Endothelial cell of umbilical vein (primary cell): ENCODE measurements at regions of chr6 and their contacts with region 1.

Region 1: DNA sequence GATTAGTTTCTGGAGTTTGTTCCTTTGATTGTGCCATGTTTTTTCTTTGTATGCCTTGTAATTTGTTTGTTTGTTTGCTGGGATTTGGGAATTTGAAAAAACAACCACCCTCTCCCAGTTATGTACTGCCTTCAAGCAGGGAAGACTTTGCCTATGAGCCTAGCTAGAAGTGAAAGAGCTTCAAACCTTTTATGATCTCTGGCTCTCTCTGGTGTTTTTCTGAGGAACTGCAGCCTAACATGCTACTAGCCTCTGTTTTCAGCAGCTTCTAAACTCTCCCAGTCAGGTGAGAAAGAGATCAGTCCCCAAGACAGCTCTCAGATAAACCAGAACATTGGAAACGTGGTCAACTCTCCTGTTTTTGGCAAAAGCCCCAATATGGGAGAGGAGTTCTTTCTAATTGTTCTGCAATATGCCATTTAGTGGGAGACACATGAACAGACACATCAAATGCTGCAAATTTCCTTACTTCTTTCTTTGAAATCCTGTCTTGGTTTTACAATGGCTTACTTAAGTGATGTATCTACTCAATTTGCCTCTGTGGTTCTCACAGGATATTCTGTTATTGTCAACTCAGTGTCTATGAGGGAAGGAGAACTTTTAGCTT is 58.9 kb upstream of the SERINC1 start:
- DNase-seq: peak; percentile 76
- H3K4me3 ChIP-seq: no peak overlapping the region
- H3K27ac ChIP-seq: no peak overlapping the region
- H3K4me1 ChIP-seq: no peaks in the 10 kb centered on the region
- H3K27me3 ChIP-seq: peaks cover 1 to 3% of the 10 kb centered on the region in 2 experiments
- CTCF ChIP-seq: peak; percentile 67 to 82
- POLR2A ChIP-seq: no peak

Region 2: GRCh38 chr6:122381497-122382265 is 148.9 kb before region 1 on chr6:
- CTCF ChIA-PET with region 1: interaction called, 78 read pairs
- POLR2A ChIA-PET with region 1: no interaction called
- dilution Hi-C with region 1: no loop called
- intact Hi-C with region 1: loop called (anchors 1 kb)
- DNase-seq: peak; percentile 69
- H3K4me3 ChIP-seq: no peak overlapping the region
- H3K27ac ChIP-seq: no peak overlapping the region
- H3K4me1 ChIP-seq: no peaks in the 10 kb centered on the region
- H3K27me3 ChIP-seq: no peaks in the 10 kb centered on the region
- CTCF ChIP-seq: peak; percentile 56 to 75
- POLR2A ChIP-seq: no peak

Region 3: DNA sequence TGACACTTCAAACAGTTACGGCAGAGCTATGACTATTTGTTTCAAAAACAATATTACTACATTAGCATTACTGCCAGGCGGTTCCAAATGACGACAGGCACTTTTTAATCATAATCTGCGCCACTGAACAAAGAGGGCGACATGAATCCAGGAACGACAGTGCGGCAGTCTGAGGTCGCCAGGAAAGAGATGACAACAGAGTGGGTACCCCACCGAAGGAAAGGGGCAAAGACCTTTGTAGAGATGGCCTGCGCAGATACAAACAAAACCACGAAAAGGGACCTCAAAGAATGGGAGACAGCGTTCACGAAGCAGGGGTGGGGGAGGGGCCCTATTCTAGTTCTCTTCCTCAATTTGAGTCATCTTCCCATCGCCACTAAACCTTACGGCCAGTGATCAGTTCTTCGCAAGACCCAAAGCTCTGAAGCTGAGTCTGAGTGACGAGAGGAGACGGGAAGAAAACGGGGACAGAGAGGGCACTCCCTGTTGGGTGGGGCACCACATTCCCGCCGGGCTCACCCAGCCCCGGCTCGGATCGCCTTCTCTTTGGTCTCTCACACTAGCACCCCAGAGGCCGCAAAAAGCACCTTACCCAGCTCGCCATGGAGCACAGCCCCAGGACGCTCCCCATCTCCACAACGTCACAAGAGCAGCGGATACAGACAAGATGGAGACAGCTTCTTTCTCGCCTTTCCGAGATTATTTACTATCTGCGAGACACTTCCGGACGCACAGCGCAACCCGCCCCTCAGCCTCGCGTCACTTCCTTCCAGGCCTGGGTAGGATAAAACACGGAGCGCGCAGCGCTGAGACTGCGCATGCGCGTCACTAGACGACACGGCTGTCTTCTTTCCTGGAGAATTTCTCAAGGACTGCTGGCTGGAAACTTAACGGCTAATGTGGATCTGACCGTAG is 59.2 kb before region 1 on chr6 and contains the start of gene SERINC1:
- CTCF ChIA-PET with region 1: interaction called, 41 read pairs
- POLR2A ChIA-PET with region 1: no interaction called
- dilution Hi-C with region 1: no loop called
- intact Hi-C with region 1: loop called (anchors 1 kb)
- DNase-seq: peak; percentile 97
- H3K4me3 ChIP-seq: peak within 1 kb of the TSS; percentile 83 to 98 (median 97)
- H3K27ac ChIP-seq: peak within 1 kb of the TSS; percentile 91
- H3K4me1 ChIP-seq: peaks cover 8% of the 10 kb centered on the region
- H3K27me3 ChIP-seq: no peaks in the 10 kb centered on the region
- CTCF ChIP-seq: no peak
- POLR2A ChIP-seq: peak; percentile 82
- total RNA-seq, gene SERINC1: 76.5 and 82.0 TPM in 2 replicates

Region 4: DNA sequence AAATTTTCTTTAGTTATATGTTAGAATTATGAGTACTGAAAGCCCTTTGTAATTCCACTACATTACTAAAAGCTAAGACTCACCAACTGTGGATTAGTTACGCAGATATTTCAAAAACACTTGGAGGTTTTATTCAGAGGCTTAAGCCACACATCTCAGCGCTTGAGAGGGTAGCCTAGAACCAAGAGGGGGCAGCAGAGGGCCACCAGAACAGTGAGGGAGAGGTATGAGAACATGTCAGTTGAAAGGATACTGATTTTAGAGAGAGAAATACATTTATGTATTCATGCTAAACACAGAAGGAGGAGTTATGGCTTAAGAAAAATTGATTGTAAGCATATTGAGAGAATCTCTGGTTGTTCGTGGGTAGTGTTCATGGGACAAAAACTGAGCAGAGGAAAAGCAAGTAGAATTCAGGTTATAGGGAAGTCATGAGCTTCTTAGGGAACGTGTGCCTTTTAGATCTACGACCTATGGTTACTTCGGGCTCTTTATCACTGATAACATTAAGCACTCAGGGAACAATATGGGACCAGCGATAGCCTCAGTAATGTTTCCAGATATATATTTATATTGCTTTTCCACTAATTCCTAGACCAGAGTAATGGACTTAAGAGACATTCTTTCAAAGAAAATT is 38.5 kb before region 1 on chr6:
- CTCF ChIA-PET with region 1: interaction called, 325 read pairs
- POLR2A ChIA-PET with region 1: interaction called, 4 read pairs
- dilution Hi-C with region 1: no loop called
- intact Hi-C with region 1: loop called (anchors 1 kb)
- DNase-seq: peak; percentile 78
- H3K4me3 ChIP-seq: no peak overlapping the region
- H3K27ac ChIP-seq: no peak overlapping the region
- H3K4me1 ChIP-seq: no peaks in the 10 kb centered on the region
- H3K27me3 ChIP-seq: peaks cover 2 to 12% of the 10 kb centered on the region in 2 experiments
- CTCF ChIP-seq: peak; percentile 76 to 82
- POLR2A ChIP-seq: no peak

Region 5: DNA sequence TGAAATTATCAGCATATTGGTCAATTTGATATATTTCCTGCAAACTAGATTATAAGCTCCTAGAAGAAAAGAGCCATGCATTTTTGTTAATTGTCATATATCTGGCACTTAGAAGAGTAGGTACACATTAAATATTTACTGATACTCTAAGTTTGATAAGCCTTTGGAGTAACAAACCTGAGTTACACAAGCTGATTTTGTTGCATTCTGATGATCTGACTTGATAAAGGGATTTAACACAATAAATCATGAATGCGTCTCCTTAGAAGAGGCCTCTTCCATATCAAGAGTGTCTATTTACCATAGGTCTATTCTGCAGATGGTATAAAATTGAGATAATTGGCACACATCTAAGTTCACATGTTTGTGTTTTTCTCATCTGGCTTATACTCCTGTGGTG is 10.4 kb before region 1 on chr6:
- CTCF ChIA-PET with region 1: interaction called, 60 read pairs
- POLR2A ChIA-PET with region 1: no interaction called
- dilution Hi-C with region 1: no loop called
- intact Hi-C with region 1: no loop called
- DNase-seq: no peak
- H3K4me3 ChIP-seq: no peak overlapping the region
- H3K27ac ChIP-seq: no peak overlapping the region
- H3K4me1 ChIP-seq: no peaks in the 10 kb centered on the region
- H3K27me3 ChIP-seq: no peaks in the 10 kb centered on the region
- CTCF ChIP-seq: no peak
- POLR2A ChIP-seq: no peak